Head of caudate nucleus (tissue), 42 donors: ENCODE measurements at regions of chr3 and their contacts with region 1.

Region 1: GRCh38 chr3:98778852-98779413 is 15.8 kb downstream of the ST3GAL6 start:
- DNase-seq: no peak

Region 2: GRCh38 chr3:98732286-98733052 is 46.5 kb before region 1 on chr3:
- intact Hi-C with region 1: loop called (anchors 5 kb)
- DNase-seq: peak; percentile 25 to 89 (median 76)